Activated T-helper 2 cell treated with anti-CD3 and anti-CD28 coated beads, Interferon-gamma antibody, Interleukin-2, Interleukin-4, amounts not matched to agents 10 μg/mL and 5 μg/mL and 100 μg/mL, durations not matched to agents 14 hours and 24 hours and 36 hours (primary cell): ENCODE measurements at regions of chr19 and their contacts with region 1.

Region 1: GRCh38 chr19:40603389-40604135 is 2.4 kb downstream of the LTBP4 start:
- DNase-seq: peak; percentile 98
- H3K4me3 Mint-ChIP-seq: peak overlapping the region; percentile 85
- H3K27ac Mint-ChIP-seq: peak overlapping the region; percentile 78
- H3K4me1 Mint-ChIP-seq: peaks cover 50% of the 10 kb centered on the region
- H3K27me3 Mint-ChIP-seq: peaks cover 26% of the 10 kb centered on the region

Region 2: GRCh38 chr19:40139533-40140287 is 463.9 kb before region 1 on chr19:
- intact Hi-C with region 1: loop called (anchors 10 kb)
- DNase-seq: no peak
- H3K4me3 Mint-ChIP-seq: no peak overlapping the region
- H3K27ac Mint-ChIP-seq: no peak overlapping the region
- H3K4me1 Mint-ChIP-seq: peaks cover 9% of the 10 kb centered on the region
- H3K27me3 Mint-ChIP-seq: peaks cover 6% of the 10 kb centered on the region

Region 3: DNA sequence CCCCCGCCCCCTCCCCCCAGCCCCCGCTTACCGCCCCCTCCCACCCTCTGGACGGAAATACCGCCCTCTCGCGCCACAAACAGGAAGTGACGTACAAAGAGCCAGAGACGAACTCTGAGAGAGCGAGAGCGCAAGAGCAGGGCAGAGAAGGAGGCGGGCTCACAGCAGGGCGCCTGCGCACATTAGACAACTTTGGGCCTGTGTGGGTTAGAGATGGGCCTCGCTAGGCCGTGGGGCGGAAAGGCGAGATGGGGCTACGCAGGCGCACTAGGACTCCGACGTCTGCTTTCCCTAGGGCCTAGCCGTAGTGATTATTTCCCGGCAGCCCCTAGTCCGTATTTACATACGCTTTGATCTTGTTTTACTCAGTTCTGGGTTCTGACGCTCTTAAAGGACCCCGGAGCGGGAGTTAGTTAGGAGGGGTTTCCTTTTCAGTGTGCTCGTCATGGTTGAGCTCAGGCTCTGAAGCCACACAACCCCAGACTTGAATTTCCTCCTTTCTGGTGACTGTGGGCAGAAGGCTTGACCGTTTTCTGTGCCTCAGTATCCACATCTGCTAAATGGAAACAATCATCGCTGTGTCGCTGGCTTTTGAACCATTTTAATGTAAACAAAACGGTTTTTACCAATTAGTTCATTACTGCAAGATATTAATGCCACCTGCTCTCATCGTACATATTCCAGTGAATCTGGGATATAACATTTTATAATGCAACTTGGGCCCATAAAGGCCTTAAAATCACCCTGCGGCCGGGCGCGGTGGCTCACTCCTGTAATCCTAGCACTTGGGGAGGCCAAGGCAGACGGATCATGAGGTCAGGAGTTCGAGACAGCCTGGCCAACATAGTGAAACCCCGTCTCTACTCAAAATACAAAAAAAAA is 318.0 kb before region 1 on chr19:
- intact Hi-C with region 1: loop called (anchors 10 kb)
- DNase-seq: peak; percentile 99
- H3K4me3 Mint-ChIP-seq: peak overlapping the region; percentile 85
- H3K27ac Mint-ChIP-seq: peak overlapping the region; percentile 99
- H3K4me1 Mint-ChIP-seq: peaks cover 28% of the 10 kb centered on the region
- H3K27me3 Mint-ChIP-seq: no peaks in the 10 kb centered on the region

Region 4: GRCh38 chr19:40570313-40571004 is 33.1 kb before region 1 on chr19:
- intact Hi-C with region 1: loop called (anchors 2 kb)
- DNase-seq: peak; percentile 98
- H3K4me3 Mint-ChIP-seq: peak overlapping the region; percentile 54
- H3K27ac Mint-ChIP-seq: peak overlapping the region; percentile 36
- H3K4me1 Mint-ChIP-seq: peaks cover 9% of the 10 kb centered on the region
- H3K27me3 Mint-ChIP-seq: peaks cover 38% of the 10 kb centered on the region

Region 5: DNA sequence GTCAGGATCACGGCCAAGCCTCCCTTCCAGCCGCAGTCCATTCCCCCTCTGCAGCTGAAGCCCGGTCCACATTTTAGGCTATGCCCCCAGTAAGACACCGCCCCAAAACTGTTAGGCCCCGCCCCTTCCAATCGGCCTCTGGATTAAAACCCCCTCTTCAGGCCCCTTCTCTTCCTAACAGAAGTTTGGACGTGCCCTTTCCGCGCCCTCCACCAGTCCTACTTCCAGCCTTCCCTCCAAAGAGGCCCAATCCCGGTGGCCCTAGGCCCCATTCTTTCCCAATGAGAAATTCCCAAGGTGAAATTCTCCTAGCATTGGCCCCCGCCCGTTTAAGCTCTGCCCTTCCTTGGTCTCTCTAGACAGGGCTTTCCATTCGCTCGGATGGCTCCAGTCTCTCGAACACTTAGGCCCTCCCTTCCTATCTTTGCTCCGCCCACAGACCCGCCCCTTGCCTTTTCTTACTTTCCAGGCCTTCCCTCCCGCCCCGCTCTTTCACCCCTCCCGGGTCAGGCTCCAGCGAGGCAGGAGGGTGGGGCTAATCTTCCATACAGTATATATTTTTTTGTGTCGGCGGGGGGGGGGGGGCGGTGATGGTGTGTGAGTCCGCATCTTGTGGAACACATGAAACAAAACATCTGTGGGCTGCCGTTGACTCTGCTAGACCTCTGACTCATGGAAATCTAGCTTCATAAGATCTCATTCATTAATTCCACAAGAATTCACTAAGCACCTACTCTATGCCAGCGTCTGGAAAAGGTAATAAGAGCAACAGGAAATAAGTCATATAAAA is 11.3 kb after region 1 on chr19:
- intact Hi-C with region 1: loop called (anchors 1 kb)
- DNase-seq: peak; percentile 73
- H3K4me3 Mint-ChIP-seq: peak overlapping the region; percentile 98
- H3K27ac Mint-ChIP-seq: peak overlapping the region; percentile 99
- H3K4me1 Mint-ChIP-seq: peaks cover 32% of the 10 kb centered on the region
- H3K27me3 Mint-ChIP-seq: no peaks in the 10 kb centered on the region

Region 6: DNA sequence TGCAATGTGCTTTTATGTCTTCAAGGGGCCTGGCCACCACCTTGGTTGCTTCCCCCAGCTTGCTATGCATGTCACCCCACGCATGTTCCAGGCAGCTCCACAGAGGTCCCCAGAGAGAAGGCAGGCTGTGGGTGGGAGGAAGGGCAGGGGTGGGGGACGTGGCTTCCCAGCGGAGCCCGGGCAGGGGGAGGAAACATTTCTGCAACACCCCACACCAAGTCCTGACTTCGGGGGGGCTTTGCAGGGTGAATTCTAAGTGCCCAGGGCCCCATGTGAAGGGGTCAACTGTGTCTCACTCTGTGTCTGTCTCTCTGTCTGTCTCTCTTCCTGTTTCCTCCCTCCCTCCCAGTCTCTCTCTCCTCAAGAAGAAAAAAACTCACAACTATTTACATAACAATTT is 37.2 kb after region 1 on chr19:
- intact Hi-C with region 1: loop called (anchors 2 kb)
- DNase-seq: no peak
- H3K4me3 Mint-ChIP-seq: no peak overlapping the region
- H3K27ac Mint-ChIP-seq: no peak overlapping the region
- H3K4me1 Mint-ChIP-seq: no peaks in the 10 kb centered on the region
- H3K27me3 Mint-ChIP-seq: no peaks in the 10 kb centered on the region

Region 7: DNA sequence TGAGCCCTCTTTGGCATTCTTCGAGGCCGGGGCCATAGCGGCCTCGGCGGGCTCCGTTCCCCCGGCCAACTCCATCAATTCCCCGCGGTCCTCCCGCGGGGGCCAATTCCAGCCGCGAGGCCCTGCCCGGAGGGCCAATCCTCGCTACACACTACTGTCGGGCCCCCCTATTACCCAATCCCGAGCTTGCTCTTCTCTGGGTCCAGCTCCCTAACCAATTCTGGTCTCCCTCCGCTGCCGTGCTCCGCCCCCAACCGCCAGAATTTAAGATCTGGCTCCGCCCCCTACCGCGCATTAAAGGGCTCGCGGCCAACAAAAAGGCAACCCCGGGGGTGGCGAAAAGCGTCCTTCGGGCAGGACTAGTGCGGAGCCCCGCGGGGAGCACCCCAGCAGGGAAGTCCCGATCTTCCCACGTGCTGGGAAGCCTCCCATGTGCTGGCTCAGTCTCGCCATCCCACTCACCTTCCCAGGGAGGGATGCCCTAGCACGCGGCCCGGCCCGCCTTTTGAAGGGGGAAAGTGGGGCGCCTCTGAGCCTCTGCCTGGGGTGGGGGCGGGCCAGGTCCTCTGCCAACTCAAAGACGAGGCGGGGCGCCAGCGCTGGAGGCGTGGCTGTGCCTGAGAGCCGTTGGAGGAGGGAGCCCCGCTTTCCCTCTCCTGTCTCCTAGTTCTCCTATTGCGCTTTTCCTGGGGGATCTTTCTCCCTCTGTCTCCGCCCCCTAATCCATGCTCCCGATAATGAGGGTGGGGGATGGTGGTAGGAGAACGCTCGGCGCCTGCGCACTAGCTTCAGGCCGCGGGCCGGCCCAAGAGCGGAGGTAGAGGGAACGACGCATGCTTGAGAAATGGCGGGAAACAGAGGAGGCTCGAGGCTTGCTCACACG is 1820.1 kb after region 1 on chr19:
- intact Hi-C with region 1: loop called (anchors 10 kb)
- DNase-seq: peak; percentile 94
- H3K4me3 Mint-ChIP-seq: peak overlapping the region; percentile 99
- H3K27ac Mint-ChIP-seq: peak overlapping the region; percentile 89
- H3K4me1 Mint-ChIP-seq: peaks cover 33% of the 10 kb centered on the region
- H3K27me3 Mint-ChIP-seq: peaks cover 2% of the 10 kb centered on the region